CD8-positive, alpha-beta T cell (primary cell): ENCODE measurements at regions of chr11 and their contacts with region 1.

Region 1: GRCh38 chr11:57345555-57346211 is 7.5 kb downstream of the P2RX3 start:
- DNase-seq: peak; percentile 45 to 85 (median 73)
- ATAC-seq: peak; percentile 93
- H3K4me3 ChIP-seq: no peak overlapping the region
- H3K4me3 Mint-ChIP-seq: no peak overlapping the region
- H3K27ac ChIP-seq: no peak overlapping the region
- H3K27ac Mint-ChIP-seq: no peak overlapping the region
- H3K4me1 ChIP-seq: no peaks in the 10 kb centered on the region
- H3K4me1 Mint-ChIP-seq: peaks cover 2% of the 10 kb centered on the region
- H3K27me3 ChIP-seq: no peaks in the 10 kb centered on the region
- H3K27me3 Mint-ChIP-seq: peaks cover 3% of the 10 kb centered on the region
- CTCF ChIP-seq: peak; percentile 80

Region 2: DNA sequence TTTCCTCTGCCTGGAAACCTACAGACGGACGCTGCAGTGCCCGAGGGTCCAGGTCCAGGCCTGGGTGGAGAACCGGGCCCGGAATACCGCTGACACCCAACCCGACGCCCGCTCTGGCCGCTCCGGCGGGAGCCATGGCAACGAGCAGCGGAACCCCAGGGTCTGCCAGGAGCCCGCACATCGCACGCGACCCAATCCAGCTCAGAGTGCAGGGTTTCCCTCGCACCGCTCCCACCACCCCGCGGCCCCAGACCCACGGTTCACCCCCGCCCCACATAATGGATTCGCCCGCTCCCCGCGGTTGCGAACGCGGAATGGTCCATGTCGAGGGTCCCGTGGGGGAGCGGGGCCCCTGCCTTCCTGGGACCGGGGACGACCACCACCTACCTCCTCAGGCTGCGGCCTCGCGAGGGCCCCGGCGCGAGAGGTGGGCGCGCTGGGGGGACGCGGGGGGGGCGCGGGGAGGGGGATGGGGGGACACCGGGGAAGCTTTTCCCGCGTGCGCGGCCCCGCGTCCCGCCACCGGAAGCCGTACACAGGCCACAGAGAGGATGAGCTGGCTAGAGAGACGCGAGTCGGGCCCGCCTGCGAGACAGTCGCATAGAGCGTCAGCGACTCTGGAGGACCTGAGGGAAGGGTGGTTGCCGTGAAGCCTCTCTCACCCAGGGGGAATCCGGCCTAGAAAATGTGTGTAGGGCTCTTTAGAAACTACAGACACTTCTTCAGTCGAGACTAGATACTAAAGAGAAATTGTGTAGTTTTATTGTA is 10.2 kb before region 1 on chr11 and contains the start of gene SSRP1:
- CTCF ChIA-PET with region 1: interaction called, 17 read pairs
- POLR2A ChIA-PET with region 1: no interaction called
- intact Hi-C with region 1: no loop called
- DNase-seq: peak; percentile 70 to 95 (median 86)
- ATAC-seq: peak; percentile 96
- H3K4me3 ChIP-seq: peak within 1 kb of the TSS; percentile 78 to 82
- H3K4me3 Mint-ChIP-seq: peak within 1 kb of the TSS; percentile 86
- H3K27ac ChIP-seq: peak within 1 kb of the TSS; percentile 83 to 91
- H3K27ac Mint-ChIP-seq: peak within 1 kb of the TSS; percentile 94
- H3K4me1 ChIP-seq: peaks cover 23% of the 10 kb centered on the region
- H3K4me1 Mint-ChIP-seq: peaks cover 33% of the 10 kb centered on the region
- H3K27me3 ChIP-seq: no peaks in the 10 kb centered on the region
- H3K27me3 Mint-ChIP-seq: no peaks in the 10 kb centered on the region
- CTCF ChIP-seq: no peak
- total RNA-seq, gene SSRP1: 34.3 to 36.3 TPM

Region 3: GRCh38 chr11:57432714-57433163 is 87.1 kb after region 1 on chr11:
- CTCF ChIA-PET with region 1: no interaction called
- POLR2A ChIA-PET with region 1: no interaction called
- intact Hi-C with region 1: no loop called
- DNase-seq: peak in 2 of 9 experiments; percentile 19 to 35
- ATAC-seq: no peak
- H3K4me3 ChIP-seq: no peak overlapping the region
- H3K4me3 Mint-ChIP-seq: no peak overlapping the region
- H3K27ac ChIP-seq: no peak overlapping the region
- H3K27ac Mint-ChIP-seq: no peak overlapping the region
- H3K4me1 ChIP-seq: no peaks in the 10 kb centered on the region
- H3K4me1 Mint-ChIP-seq: no peaks in the 10 kb centered on the region
- H3K27me3 ChIP-seq: no peaks in the 10 kb centered on the region
- H3K27me3 Mint-ChIP-seq: peaks cover 2% of the 10 kb centered on the region
- CTCF ChIP-seq: no peak

Region 4: GRCh38 chr11:57480409-57481137 is 134.9 kb after region 1 on chr11:
- CTCF ChIA-PET with region 1: interaction called, 7 read pairs
- POLR2A ChIA-PET with region 1: no interaction called
- intact Hi-C with region 1: loop called (anchors 1 kb)
- DNase-seq: peak in 8 of 9 experiments; percentile 43 to 74 (median 65)
- ATAC-seq: peak; percentile 51
- H3K4me3 ChIP-seq: no peak overlapping the region
- H3K4me3 Mint-ChIP-seq: no peak overlapping the region
- H3K27ac ChIP-seq: no peak overlapping the region
- H3K27ac Mint-ChIP-seq: no peak overlapping the region
- H3K4me1 ChIP-seq: peaks cover 14% of the 10 kb centered on the region
- H3K4me1 Mint-ChIP-seq: peaks cover 26% of the 10 kb centered on the region
- H3K27me3 ChIP-seq: peaks cover 4 to 10% of the 10 kb centered on the region in 2 experiments
- H3K27me3 Mint-ChIP-seq: peaks cover 10% of the 10 kb centered on the region
- CTCF ChIP-seq: peak; percentile 56

Region 5: DNA sequence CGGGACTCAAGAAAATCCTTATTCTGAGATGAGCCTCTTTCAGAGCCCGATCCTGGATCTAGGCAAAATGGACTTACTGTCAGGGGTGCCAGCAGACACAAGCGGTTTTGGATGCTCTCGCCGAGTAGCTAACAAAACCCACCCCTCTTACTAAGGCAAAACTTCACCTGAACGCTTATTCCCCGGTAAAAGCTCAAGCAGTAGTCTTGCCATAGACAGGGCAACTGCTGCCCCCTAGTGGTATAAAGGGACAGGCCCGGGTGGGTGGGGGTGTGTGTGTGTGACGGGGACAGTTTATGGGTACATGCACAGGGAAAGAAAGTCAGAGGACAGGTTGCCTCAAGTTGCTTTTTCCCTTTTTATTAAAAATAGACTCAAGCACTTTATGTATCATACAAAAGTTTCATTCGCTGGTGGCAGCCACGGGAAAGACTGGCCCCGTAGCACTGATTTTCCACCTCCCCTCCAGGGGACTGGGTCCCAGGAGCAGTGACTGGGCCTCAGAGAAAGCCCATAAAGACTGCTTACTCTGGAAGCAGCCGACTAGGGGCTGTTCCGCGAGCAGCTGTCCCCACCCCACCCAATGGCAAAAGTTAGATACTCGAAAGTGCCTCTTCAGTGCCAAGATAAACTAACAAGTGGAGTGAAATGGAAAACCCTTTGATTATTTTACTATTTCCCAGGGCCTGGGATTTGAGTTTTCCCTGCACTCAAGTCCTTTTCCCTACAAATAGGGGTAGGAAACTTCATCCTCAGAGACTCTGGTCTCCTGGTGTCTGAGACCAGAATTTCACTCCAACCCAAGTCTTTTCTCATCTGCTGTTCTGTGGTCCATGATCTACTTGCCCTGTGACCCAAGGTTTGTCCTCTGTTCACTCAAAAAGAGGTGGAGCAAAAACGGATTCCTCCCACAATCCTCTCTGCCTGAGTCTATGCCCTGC is 299.3 kb after region 1 on chr11:
- CTCF ChIA-PET with region 1: interaction called, 14 read pairs
- POLR2A ChIA-PET with region 1: no interaction called
- intact Hi-C with region 1: loop called (anchors 1 kb)
- DNase-seq: peak; percentile 74 to 93 (median 85)
- ATAC-seq: peak; percentile 61
- H3K4me3 ChIP-seq: no peak overlapping the region
- H3K4me3 Mint-ChIP-seq: no peak overlapping the region
- H3K27ac ChIP-seq: no peak overlapping the region
- H3K27ac Mint-ChIP-seq: no peak overlapping the region
- H3K4me1 ChIP-seq: peaks cover 15% of the 10 kb centered on the region
- H3K4me1 Mint-ChIP-seq: peaks cover 34% of the 10 kb centered on the region
- H3K27me3 ChIP-seq: peaks cover 0 to 22% of the 10 kb centered on the region in 2 experiments
- H3K27me3 Mint-ChIP-seq: peaks cover 48% of the 10 kb centered on the region
- CTCF ChIP-seq: peak; percentile 78

Region 6: DNA sequence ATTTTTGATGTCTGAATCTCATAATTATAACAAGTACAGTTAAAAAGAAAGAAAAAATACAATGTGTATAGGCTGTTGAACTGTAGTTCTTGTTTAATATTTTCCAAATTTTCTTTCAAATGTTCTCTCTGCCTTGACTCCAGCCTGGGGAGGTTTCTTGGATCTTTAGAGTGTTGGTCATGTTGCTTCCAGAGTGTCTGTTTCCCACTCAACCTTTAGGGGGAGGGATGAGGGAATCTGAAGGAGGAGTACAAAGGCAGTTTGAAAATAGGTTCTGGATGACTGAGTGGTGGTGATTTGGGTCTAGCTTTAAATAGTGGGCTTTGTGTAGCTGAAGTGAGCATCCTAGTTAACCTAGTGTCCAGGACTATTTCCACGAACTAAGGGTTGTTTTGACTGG is 417.9 kb after region 1 on chr11:
- CTCF ChIA-PET with region 1: no interaction called
- POLR2A ChIA-PET with region 1: no interaction called
- intact Hi-C with region 1: no loop called
- DNase-seq: no peak
- ATAC-seq: no peak
- H3K4me3 ChIP-seq: no peak overlapping the region
- H3K4me3 Mint-ChIP-seq: no peak overlapping the region
- H3K27ac ChIP-seq: no peak overlapping the region
- H3K27ac Mint-ChIP-seq: no peak overlapping the region
- H3K4me1 ChIP-seq: no peaks in the 10 kb centered on the region
- H3K4me1 Mint-ChIP-seq: peaks cover 19% of the 10 kb centered on the region
- H3K27me3 ChIP-seq: no peaks in the 10 kb centered on the region
- H3K27me3 Mint-ChIP-seq: no peaks in the 10 kb centered on the region
- CTCF ChIP-seq: no peak

Region 7: GRCh38 chr11:58788355-58789023 is 1442.8 kb after region 1 on chr11:
- CTCF ChIA-PET with region 1: no interaction called
- POLR2A ChIA-PET with region 1: no interaction called
- intact Hi-C with region 1: loop called in 1 of 2 experiments (anchors 5 kb)
- DNase-seq: peak in 8 of 9 experiments; percentile 13 to 65 (median 48)
- ATAC-seq: peak; percentile 90
- H3K4me3 ChIP-seq: no peak overlapping the region
- H3K4me3 Mint-ChIP-seq: no peak overlapping the region
- H3K27ac ChIP-seq: no peak overlapping the region
- H3K27ac Mint-ChIP-seq: no peak overlapping the region
- H3K4me1 ChIP-seq: no peaks in the 10 kb centered on the region
- H3K4me1 Mint-ChIP-seq: peaks cover 3% of the 10 kb centered on the region
- H3K27me3 ChIP-seq: no peaks in the 10 kb centered on the region
- H3K27me3 Mint-ChIP-seq: peaks cover 4% of the 10 kb centered on the region
- CTCF ChIP-seq: peak; percentile 91